Activated B cell treated with CpG ODN at 0.5 μM for 24 hours (primary cell): ENCODE measurements at regions of chr7 and their contacts with region 1.

Region 1: GRCh38 chr7:99997545-99998137 is 17.8 kb upstream of the ZKSCAN1 start:
- DNase-seq: peak; percentile 60
- ATAC-seq: peak; percentile 92
- H3K4me3 Mint-ChIP-seq: peak overlapping the region; percentile 80
- H3K27ac Mint-ChIP-seq: peak overlapping the region; percentile 85
- H3K4me1 Mint-ChIP-seq: peaks cover 12% of the 10 kb centered on the region
- H3K27me3 Mint-ChIP-seq: peaks cover 1% of the 10 kb centered on the region
- CTCF ChIP-seq: no peak

Region 2: DNA sequence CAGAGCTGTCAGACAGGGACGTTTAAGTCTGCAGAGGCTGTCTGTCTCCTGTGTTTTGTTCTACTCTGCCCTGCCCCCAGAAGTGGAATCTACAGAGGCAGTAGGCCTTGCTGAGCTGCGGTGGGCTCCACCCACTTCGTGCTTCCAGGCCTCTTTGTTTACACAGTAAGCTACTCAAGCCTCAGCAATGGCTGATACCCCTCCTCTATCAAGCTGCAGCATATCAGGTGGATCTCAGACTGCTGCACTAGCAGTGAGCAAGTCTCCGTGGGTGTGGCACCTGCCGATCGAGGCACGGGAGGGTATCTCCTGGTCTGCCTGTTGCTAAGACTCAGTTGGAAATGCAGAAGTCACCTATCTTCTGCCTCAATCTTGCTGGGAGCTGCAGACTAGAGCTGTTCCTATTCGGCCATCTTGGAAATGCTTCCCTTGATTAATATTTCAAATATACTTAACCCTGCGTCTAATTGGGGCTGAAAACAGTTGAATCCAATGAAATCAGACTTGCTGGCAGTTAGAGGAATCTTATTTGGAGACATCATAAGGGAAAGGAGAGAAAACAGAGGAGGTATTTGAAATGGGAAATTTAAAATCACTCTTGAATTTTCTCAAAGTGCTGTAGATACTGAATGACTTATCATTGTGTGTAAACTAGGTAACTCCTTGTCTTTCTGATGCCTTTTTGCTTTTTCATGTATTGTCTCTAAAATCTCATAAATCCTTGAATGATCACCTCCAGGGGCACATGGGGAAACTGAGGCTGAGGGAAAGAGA is 304.0 kb before region 1 on chr7:
- CTCF ChIA-PET with region 1: no interaction called
- POLR2A ChIA-PET with region 1: no interaction called
- intact Hi-C with region 1: no loop called
- DNase-seq: no peak
- ATAC-seq: no peak
- H3K4me3 Mint-ChIP-seq: no peak overlapping the region
- H3K27ac Mint-ChIP-seq: no peak overlapping the region
- H3K4me1 Mint-ChIP-seq: no peaks in the 10 kb centered on the region
- H3K27me3 Mint-ChIP-seq: peaks cover 6% of the 10 kb centered on the region
- CTCF ChIP-seq: no peak

Region 3: GRCh38 chr7:100015232-100016209 is 17.9 kb after region 1 on chr7 and contains the start of gene ZKSCAN1:
- CTCF ChIA-PET with region 1: no interaction called
- POLR2A ChIA-PET with region 1: interaction called, 38 read pairs
- intact Hi-C with region 1: loop called (anchors 1 kb)
- DNase-seq: peak; percentile 76
- ATAC-seq: peak; percentile 97
- H3K4me3 Mint-ChIP-seq: peak within 1 kb of the TSS; percentile 90
- H3K27ac Mint-ChIP-seq: peak within 1 kb of the TSS; percentile 84
- H3K4me1 Mint-ChIP-seq: peaks cover 34% of the 10 kb centered on the region
- H3K27me3 Mint-ChIP-seq: peaks cover 6% of the 10 kb centered on the region
- CTCF ChIP-seq: no peak
- total RNA-seq, gene ZKSCAN1: 59.0 and 70.6 TPM in 2 replicates

Region 4: DNA sequence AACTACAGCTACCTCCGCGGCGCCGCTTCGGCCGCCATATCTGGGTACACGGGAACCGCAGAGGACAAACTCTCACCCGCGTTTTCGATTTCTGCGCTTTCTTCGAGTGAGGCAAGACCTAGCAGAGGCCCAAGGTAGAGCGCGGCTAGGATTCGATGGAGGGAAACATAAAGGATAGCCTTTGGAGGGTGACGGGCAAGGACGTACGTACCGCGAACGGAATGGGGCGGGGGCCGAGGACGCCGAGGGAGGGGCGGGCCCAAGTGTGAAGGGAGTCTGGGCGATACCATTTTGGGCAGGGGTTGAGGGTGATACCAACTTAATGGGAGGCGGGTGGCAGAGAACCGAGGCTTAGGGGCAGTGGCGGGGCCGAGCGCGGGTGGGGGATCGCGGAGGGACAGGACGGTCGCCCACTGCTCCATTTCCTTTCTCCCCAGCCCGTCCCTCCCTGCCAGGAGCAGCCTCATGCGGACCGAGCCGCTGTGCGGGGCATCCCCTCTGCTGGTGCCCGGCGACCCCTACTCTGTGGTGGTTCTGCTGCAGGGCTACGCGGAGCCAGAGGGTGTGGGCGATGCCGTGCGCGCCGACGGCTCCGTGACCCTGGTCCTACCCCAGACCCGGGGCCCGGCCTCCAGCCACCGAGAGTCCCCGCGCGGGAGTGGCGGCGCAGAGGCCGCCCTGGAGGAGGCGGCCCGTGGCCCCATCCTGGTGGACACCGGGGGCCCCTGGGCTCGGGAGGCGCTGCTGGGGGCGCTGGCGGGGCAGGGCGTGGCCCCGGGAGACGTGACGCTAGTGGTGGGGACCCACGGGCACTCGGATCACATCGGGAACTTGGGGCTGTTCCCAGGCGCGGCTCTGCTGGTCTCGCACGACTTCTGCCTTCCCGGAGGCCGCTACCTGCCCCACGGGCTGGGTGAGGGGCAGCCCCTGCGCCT is 129.6 kb after region 1 on chr7 and contains the start of gene MBLAC1:
- CTCF ChIA-PET with region 1: interaction called, 4 read pairs
- POLR2A ChIA-PET with region 1: interaction called, 3 read pairs
- intact Hi-C with region 1: loop called (anchors 1 kb)
- DNase-seq: peak; percentile 81
- ATAC-seq: peak; percentile 85
- H3K4me3 Mint-ChIP-seq: peak within 1 kb of the TSS; percentile 100
- H3K27ac Mint-ChIP-seq: peak within 1 kb of the TSS; percentile 100
- H3K4me1 Mint-ChIP-seq: peaks cover 41% of the 10 kb centered on the region
- H3K27me3 Mint-ChIP-seq: no peaks in the 10 kb centered on the region
- CTCF ChIP-seq: no peak
- total RNA-seq, gene MBLAC1: 1.9 and 2.2 TPM in 2 replicates

Region 5: DNA sequence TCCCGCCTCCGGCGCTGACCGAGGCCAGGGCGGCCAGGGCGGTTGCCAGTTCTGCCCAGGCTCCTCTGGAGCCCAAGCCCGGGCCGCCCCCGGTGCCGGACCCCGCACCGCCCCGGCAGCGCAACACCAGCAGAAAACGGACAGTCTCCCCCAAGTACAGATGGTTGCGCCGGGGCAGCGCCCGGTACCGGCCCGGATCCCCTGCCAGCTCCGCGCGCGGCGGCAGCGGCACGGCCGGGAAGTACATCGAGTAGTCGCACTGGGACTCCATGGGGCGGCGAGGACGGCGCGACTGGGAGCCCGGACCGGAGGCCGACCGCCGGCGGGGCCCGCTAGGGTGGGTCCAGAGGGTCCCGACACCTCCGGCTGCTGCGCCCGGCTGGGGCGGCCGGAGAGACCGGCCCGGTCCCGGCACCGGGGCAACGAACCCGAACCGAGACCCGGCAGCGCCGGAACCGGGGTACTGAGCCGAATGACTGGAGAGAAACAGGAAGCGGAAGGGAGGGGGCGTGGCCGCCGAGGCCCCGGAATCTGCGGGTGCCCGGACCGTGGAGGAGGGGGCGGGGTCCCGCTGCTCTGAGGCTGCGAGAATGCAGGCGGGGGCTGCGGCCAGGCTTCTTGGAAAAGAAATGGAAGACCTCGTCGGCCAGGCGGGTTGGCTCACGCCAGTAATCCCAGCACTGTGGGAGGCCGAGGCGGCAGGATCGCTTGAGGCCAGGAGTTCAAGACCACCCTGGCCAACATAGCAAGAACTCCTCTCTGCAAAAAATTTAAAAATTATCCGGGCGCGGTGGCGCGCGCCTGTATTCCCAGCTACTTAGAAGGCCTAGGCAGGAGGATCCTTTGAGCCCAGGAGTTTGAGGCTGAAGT is 160.8 kb after region 1 on chr7 and contains the start of gene TRAPPC14:
- CTCF ChIA-PET with region 1: no interaction called
- POLR2A ChIA-PET with region 1: interaction called, 14 read pairs
- intact Hi-C with region 1: no loop called
- DNase-seq: peak; percentile 93
- ATAC-seq: peak; percentile 89
- H3K4me3 Mint-ChIP-seq: peak within 1 kb of the TSS; percentile 85
- H3K27ac Mint-ChIP-seq: peak within 1 kb of the TSS; percentile 86
- H3K4me1 Mint-ChIP-seq: peaks cover 44% of the 10 kb centered on the region
- H3K27me3 Mint-ChIP-seq: no peaks in the 10 kb centered on the region
- CTCF ChIP-seq: no peak
- total RNA-seq, gene TRAPPC14: 55.7 and 65.3 TPM in 2 replicates